Mammary epithelial cell (primary cell): ENCODE measurements at regions of chr10 and their contacts with region 1.

Region 1: GRCh38 chr10:88553116-88553752 is 29.9 kb downstream of the RNLS start:
- DNase-seq: peak; percentile 66
- H3K4me3 ChIP-seq: no peak overlapping the region
- H3K27ac ChIP-seq: no peak overlapping the region
- H3K4me1 ChIP-seq: no peaks in the 10 kb centered on the region
- H3K27me3 ChIP-seq: no peaks in the 10 kb centered on the region
- CTCF ChIP-seq: peak; percentile 88 to 89

Region 2: DNA sequence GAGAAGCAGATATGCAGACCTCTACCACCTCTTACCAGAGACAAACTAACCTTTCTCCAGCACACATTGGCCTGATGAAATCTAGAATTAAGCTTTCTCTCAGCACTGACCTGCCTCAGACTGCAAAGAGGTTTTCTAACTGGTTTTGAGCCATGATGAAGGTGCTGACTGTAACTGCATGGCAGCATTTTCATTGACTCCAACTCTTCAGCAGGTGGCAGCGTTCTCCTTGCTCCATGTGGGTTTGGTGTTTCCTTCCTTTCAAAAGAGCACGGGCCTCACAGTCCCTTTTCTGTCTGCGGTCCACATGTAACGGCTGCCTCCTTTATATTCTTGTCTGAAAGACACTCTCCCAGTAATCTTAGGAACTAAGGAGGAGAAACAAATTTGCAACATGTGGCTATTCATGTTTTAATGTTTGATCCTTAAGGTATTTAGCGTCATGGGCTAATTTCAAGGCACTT is 702.5 kb before region 1 on chr10:
- CTCF ChIA-PET with region 1: no interaction called
- dilution Hi-C with region 1: no loop called
- in situ Hi-C with region 1: loop called in 1 of 2 experiments (anchors 10 kb)
- intact Hi-C with region 1: no loop called
- DNase-seq: peak; percentile 64
- H3K4me3 ChIP-seq: no peak overlapping the region
- H3K27ac ChIP-seq: no peak overlapping the region
- H3K4me1 ChIP-seq: peaks cover 20% of the 10 kb centered on the region
- H3K27me3 ChIP-seq: no peaks in the 10 kb centered on the region
- CTCF ChIP-seq: peak; percentile 59 to 76

Region 3: DNA sequence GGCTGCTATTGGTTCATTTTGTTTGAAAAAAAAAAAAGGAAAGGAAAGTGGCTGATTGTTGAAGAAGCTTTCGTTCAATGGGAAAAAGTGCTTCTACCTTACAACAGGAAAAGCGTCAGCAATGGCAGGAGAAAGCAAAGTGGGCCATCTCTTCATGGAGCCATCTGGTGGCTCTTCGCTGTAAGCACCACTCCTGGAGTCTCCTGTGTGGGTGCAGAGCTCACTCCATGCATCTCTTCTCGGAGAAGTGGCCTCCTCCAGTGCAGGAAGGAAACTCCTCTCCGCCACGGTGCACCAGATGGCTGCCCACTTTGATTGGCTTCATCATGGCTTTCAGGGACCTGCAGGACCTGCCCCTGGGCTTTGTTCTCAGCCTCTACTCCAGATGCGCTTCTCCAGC is 438.9 kb before region 1 on chr10:
- CTCF ChIA-PET with region 1: no interaction called
- dilution Hi-C with region 1: no loop called
- in situ Hi-C with region 1: no loop called
- intact Hi-C with region 1: loop called (anchors 10 kb)
- DNase-seq: no peak
- H3K4me3 ChIP-seq: no peak overlapping the region
- H3K27ac ChIP-seq: no peak overlapping the region
- H3K4me1 ChIP-seq: peaks cover 28% of the 10 kb centered on the region
- H3K27me3 ChIP-seq: no peaks in the 10 kb centered on the region
- CTCF ChIP-seq: peak; percentile 38 to 52

Region 4: DNA sequence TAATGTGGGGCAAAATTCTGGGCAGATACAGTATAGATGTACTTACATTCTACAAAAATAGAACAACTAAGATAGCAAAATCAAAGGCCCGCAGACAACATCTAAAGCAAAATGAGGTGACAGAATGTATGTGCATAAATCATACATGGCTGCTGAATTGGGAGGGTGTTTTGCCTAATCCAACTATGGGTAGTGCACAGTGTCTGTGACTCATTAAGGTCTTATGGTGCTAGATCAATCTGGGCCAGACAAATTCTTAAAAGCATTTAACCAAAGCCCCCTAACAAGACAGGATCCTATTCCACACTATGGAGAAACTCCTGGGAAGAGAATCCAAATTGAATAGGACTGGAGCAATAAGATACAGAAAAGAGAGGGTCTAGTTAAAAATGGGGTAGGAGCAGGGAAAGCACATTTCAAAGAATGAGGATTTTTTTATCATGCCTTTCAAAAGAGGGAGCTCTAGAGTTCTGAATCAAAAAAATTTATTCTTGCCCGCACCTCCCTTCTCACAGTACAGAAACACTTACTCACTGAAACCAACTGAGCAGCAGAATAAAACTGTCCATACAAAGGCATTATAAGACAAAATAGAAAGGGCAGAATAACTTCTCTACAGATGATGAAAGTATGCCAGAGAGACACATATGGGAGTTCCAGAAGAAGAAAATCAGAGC is 151.4 kb before region 1 on chr10:
- CTCF ChIA-PET with region 1: interaction called, 4 read pairs
- dilution Hi-C with region 1: no loop called
- in situ Hi-C with region 1: loop called in 1 of 2 experiments (anchors 25 kb)
- intact Hi-C with region 1: loop called (anchors 1 kb)
- DNase-seq: peak; percentile 49
- H3K4me3 ChIP-seq: no peak overlapping the region
- H3K27ac ChIP-seq: no peak overlapping the region
- H3K4me1 ChIP-seq: no peaks in the 10 kb centered on the region
- H3K27me3 ChIP-seq: no peaks in the 10 kb centered on the region
- CTCF ChIP-seq: peak; percentile 15 to 54

Region 5: DNA sequence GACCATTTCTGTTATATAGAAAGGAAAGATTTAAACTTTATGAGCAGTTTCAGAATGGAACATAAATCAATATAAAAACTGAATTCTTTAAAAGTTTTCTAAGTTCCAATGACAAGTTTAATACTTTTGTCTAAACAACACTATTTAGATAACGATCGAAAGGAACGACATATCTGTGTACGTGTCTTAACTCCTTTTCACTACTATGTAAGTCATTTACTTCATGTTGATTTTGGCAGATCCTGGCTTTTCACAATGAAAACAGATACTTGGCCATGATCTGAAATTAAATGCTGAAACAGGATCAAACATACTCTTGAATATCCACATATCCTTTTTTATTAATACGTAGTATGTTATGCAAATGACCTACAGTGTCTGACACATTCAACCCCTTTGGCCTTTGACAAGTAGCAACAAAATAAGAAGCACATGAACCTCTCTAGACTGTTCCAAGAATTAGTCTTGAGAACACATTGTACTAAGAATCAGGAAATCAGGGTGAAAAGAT is 12.1 kb before region 1 on chr10:
- CTCF ChIA-PET with region 1: no interaction called
- dilution Hi-C with region 1: no loop called
- in situ Hi-C with region 1: no loop called
- intact Hi-C with region 1: loop called (anchors 1 kb)
- DNase-seq: peak; percentile 50
- H3K4me3 ChIP-seq: no peak overlapping the region
- H3K27ac ChIP-seq: no peak overlapping the region
- H3K4me1 ChIP-seq: peaks cover 5% of the 10 kb centered on the region
- H3K27me3 ChIP-seq: no peaks in the 10 kb centered on the region
- CTCF ChIP-seq: no peak